Activated CD4-positive, alpha-beta memory T cell treated with anti-CD3 and anti-CD28 coated beads, Interleukin-2, amount 10 ng/mL, durations not matched to agents 7 days and 5 days (primary cell): ENCODE measurements at regions of chr14 and their contacts with region 1.

Region 1: DNA sequence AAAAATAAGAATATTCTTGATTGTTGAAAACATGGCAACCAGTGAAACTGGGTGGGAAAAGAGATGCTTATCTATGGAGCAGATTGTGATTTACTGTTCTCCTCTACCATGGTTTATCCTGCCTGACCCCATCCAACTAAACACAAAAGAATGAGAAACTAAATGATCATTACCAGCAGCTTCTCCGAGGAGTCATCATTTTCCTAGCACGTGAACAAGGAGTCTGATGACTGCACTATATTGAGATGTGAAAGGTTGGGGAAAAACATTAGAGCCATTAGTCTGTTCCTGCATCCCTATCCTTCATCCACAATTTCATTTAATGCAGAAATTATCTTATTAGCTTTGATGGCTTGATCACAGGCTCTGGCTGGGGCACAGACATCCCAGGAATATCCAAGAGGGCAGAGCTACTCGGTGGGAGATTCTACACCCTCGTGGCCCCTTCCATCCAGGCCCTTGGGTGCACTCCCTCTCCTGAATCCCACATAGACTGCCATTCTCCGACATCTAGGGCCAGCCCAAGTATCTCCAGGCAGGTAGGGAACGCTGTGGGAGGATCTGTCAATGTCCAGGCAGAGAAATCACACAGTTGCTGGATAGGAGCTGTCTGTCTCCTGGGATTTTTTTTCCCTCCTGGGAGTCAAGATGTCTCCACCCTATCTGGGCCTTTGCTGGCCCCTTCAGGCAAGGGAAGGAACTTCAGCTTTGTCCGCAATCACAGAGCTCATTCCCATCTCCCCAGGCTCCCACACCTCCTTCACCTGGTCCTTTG is 43.3 kb upstream of the DHRS4 start:
- DNase-seq: no peak
- H3K4me3 Mint-ChIP-seq: no peak overlapping the region
- H3K27ac Mint-ChIP-seq: no peak overlapping the region
- H3K4me1 Mint-ChIP-seq: no peaks in the 10 kb centered on the region
- H3K27me3 Mint-ChIP-seq: peaks cover 20% of the 10 kb centered on the region

Region 2: GRCh38 chr14:23665375-23666192 is 244.7 kb before region 1 on chr14:
- CTCF ChIA-PET with region 1: interaction called, 12 read pairs
- POLR2A ChIA-PET with region 1: no interaction called
- DNase-seq: no peak
- H3K4me3 Mint-ChIP-seq: no peak overlapping the region
- H3K27ac Mint-ChIP-seq: no peak overlapping the region
- H3K4me1 Mint-ChIP-seq: no peaks in the 10 kb centered on the region
- H3K27me3 Mint-ChIP-seq: peaks cover 7% of the 10 kb centered on the region

Region 3: DNA sequence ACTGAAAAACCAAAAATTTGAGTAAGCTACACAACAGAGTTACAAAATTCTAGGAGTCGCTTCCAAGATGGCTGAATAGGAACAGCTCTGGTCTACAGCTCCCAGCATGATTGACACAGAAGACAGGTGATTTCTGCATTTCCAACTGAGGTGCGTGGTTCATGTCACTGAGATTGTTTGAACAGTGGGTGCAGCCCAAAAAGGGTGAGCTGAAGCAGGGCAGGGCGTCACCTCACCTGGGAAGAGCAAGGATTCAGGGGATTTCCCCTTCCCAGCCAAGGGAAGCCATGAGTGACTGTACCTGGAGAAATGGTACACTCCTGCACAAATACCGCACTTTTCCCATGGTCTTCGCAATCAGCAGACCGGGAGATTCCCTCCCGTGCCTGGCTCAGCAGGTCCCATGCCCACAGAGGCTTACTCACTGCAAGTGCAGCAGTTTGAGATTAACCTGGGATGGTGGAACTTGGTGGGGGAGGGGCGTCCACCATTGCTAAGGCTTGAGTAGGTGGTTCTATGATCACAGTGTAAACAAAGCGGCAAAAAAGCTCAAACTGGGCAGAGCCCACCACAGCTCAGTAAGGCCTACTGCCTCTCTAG is 32.2 kb after region 1 on chr14:
- CTCF ChIA-PET with region 1: no interaction called
- POLR2A ChIA-PET with region 1: no interaction called
- DNase-seq: no peak
- H3K4me3 Mint-ChIP-seq: no peak overlapping the region
- H3K27ac Mint-ChIP-seq: no peak overlapping the region
- H3K4me1 Mint-ChIP-seq: no peaks in the 10 kb centered on the region
- H3K27me3 Mint-ChIP-seq: peaks cover 4% of the 10 kb centered on the region